Cardiac septum (tissue), 1 donor: ENCODE measurements at regions of chr12 and their contacts with region 1.

Region 1: GRCh38 chr12:46661110-46661845 is 164.5 kb downstream of the SLC38A4 start:
- DNase-seq: no peak

Region 2: GRCh38 chr12:46342562-46343033 is 318.7 kb before region 1 on chr12:
- intact Hi-C with region 1: loop called (anchors 2 kb)
- DNase-seq: no peak

Region 3: GRCh38 chr12:46372544-46373110 is 288.7 kb before region 1 on chr12 and contains the start of gene SLC38A2:
- intact Hi-C with region 1: loop called (anchors 1 kb)
- DNase-seq: peak; percentile 99
- total RNA-seq, gene SLC38A2: 140 TPM

Region 4: DNA sequence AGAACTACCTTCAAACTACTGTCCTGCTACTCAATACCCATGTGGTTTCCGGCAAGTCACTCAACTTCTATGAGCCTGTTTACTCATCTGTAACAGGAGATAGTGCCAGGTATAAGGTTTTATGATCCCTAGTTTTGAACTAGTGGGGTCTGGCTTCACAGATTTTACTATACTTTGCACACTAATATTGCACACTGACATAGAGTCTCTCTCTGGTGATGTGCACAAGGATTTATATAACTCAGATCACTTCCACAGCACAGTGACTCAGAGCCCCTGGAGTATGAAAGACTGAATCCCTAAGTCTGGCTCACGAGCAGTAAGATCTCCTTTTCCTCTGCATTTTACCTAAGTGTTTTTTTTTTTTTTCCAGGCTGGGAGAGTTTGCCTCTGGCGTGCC is 219.0 kb before region 1 on chr12:
- intact Hi-C with region 1: no loop called
- DNase-seq: no peak

Region 5: GRCh38 chr12:46534327-46534840 is 126.9 kb before region 1 on chr12:
- intact Hi-C with region 1: loop called (anchors 10 kb)
- DNase-seq: no peak

Region 6: GRCh38 chr12:46556105-46556559 is 105.1 kb before region 1 on chr12:
- intact Hi-C with region 1: loop called (anchors 5 kb)
- DNase-seq: no peak

Region 7: DNA sequence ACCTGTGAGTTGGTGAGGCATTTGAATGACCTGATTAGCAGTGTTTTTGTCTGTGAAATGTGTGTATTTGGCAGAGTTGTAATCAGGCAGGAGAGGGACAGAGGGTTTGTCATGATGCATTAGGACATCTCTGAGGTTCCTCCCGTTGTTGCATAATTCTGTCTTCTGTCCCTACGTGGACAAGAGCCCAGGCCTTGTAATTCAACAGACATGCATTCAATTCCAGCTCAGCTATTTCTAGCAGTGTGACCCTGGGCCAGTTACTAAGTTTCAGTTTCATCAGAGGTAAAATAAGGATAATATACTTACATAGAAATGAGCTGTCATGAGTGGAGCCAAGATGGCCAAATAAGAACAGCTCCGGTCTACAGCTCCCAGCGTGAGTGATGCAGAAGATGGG is 44.1 kb before region 1 on chr12:
- intact Hi-C with region 1: loop called (anchors 5 kb)
- DNase-seq: no peak

Region 8: DNA sequence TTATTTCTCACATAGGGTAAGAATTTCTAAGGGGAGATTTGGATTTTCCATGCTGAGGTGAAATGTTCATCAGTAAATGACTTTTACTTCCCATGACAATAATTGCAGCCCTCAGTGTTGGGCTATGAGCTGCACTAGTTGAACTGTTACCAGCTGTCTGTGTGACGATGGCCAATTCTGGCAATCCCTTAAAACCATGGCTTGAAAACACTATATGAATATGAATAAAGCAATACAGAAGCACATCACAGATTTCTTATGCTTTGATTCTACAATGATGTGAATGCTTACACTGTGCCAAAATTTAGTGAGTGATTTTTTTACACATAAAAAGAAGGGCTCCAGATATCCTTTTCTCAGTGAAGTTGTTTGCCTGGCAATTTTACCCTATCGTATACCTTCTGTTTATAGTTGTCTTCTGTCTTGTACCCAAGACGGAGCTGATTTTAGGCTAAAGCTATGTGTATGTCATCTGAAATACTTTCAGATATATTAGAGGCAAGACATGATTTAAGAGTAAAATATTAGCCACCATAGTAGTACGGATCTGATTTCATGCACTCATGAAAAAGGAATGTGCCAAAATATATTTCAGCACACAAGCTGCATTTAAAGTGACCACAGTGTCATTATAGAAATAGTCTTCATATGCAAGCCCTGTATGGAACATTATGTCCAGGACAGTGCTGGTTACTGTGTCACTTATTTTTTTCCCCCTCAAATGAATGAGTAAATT is 112.5 kb after region 1 on chr12:
- intact Hi-C with region 1: no loop called
- DNase-seq: no peak